Mammary epithelial cell (primary cell): ENCODE measurements at regions of chr17 and their contacts with region 1.

Region 1: GRCh38 chr17:74566132-74566753 is 1.1 kb downstream of the CD300H start:
- DNase-seq: peak; percentile 25
- H3K4me3 ChIP-seq: no peak overlapping the region
- H3K27ac ChIP-seq: no peak overlapping the region
- H3K4me1 ChIP-seq: peaks cover 14% of the 10 kb centered on the region
- H3K27me3 ChIP-seq: no peaks in the 10 kb centered on the region
- CTCF ChIP-seq: peak; percentile 53 to 75

Region 2: DNA sequence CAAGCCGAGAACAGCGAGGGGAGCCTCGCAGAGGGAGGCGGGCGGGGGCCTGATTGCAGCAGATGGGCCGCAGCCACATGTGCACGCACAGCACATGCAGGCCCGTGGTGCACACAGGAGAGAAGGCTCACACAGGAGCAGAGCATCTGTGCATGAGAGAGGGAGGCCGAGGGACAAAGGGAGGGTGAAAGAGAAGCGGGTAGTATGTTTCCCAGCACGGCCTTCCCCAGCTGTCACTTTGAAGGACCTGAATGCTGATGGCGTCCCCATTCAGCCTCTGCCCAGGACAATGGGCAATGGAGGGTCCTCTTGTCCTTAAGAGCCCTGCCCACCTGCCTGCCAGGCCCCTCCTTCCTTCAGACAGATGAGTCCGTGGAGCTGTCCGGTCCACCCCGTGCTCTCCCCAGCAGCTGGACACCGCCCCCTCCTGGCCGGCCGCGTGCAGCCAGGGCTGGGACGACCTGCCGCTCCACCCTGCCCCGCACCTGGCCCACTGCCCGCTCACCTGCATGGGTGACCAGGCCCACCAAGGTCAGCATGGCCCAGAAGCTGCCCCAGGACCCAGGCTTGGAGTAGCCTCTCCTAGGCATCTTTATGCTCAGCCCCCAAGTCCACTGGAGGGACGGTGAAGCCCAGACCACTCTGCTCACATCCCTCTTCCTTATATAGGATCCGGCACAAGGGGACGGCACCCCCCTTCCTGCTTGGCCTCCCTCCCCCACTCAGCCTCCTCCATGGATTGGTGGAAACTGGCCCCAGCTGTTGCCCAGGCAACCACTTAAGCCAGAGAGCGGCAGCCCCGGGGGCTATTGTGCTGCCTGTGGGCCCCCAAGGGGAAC is 204.8 kb before region 1 on chr17 and contains the start of gene BTBD17:
- CTCF ChIA-PET with region 1: no interaction called
- dilution Hi-C with region 1: no loop called
- in situ Hi-C with region 1: no loop called
- intact Hi-C with region 1: no loop called
- DNase-seq: peak; percentile 20
- H3K4me3 ChIP-seq: no peak within 1 kb of the TSS
- H3K27ac ChIP-seq: no peak within 1 kb of the TSS
- H3K4me1 ChIP-seq: no peaks in the 10 kb centered on the region
- H3K27me3 ChIP-seq: peaks cover 9% of the 10 kb centered on the region
- CTCF ChIP-seq: peak; percentile 45 to 72
- total RNA-seq, gene BTBD17: not detected

Region 3: DNA sequence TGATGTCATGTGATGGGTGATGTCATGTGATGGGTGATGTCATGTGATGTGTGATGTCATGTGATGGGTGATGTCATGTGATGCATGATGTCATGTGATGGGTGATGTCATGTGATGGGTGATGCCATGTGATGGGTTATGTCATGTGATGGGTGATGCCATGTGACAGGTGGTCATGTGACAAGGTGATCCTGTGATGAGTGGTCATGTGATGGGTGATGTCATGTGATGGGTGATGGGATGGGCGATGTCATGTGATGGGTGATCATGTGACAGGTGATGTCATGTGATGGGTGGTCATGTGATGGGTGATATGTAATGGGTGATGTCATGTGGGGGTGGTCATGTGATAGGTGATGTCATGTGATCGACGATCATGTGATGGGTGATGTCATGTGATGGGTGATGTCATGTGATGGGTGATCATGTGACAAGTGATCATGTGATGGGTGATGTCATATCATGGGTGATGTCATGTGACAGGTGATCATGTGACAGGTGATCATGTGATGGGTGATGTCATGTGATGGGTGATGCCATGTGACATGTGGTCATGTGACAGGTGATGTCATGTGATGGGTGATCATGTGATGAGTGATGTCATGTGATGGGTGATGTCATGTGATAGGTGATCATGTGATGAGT is 52.1 kb before region 1 on chr17:
- CTCF ChIA-PET with region 1: no interaction called
- dilution Hi-C with region 1: loop called (anchors 5 kb)
- in situ Hi-C with region 1: no loop called
- intact Hi-C with region 1: no loop called
- DNase-seq: peak; percentile 54
- H3K4me3 ChIP-seq: no peak overlapping the region
- H3K27ac ChIP-seq: no peak overlapping the region
- H3K4me1 ChIP-seq: no peaks in the 10 kb centered on the region
- H3K27me3 ChIP-seq: no peaks in the 10 kb centered on the region
- CTCF ChIP-seq: no peak

Region 4: GRCh38 chr17:74608511-74608910 is 42.3 kb after region 1 on chr17:
- CTCF ChIA-PET with region 1: no interaction called
- dilution Hi-C with region 1: no loop called
- in situ Hi-C with region 1: no loop called
- intact Hi-C with region 1: no loop called
- DNase-seq: no peak
- H3K4me3 ChIP-seq: no peak overlapping the region
- H3K27ac ChIP-seq: no peak overlapping the region
- H3K4me1 ChIP-seq: peaks cover 9% of the 10 kb centered on the region
- H3K27me3 ChIP-seq: no peaks in the 10 kb centered on the region
- CTCF ChIP-seq: no peak

Region 5: GRCh38 chr17:74619077-74619673 is 52.9 kb after region 1 on chr17:
- CTCF ChIA-PET with region 1: no interaction called
- dilution Hi-C with region 1: loop called (anchors 5 kb)
- in situ Hi-C with region 1: no loop called
- intact Hi-C with region 1: no loop called
- DNase-seq: no peak
- H3K4me3 ChIP-seq: no peak overlapping the region
- H3K27ac ChIP-seq: no peak overlapping the region
- H3K4me1 ChIP-seq: no peaks in the 10 kb centered on the region
- H3K27me3 ChIP-seq: peaks cover 3% of the 10 kb centered on the region
- CTCF ChIP-seq: no peak

Region 6: DNA sequence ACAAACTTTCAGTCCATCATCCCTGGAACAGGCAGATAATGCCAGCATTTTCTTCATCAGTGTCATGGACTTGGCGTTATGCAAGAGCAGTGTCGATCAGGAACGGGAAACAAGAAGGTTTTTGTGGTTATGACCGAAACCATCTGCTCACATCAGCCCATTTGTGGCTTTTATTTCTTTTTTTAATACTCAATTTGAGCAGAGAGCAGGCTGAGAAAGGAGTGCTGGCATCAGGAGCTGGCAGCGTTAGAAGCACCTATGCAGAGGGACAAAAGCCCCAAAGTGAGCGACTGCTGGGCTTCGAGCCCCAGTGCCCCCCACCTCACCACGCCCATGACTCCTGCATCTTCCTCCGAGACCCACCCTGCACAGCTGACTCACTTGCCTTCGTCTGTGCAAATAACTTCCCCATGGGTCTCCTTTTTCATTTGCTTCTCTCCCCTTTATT is 73.5 kb after region 1 on chr17:
- CTCF ChIA-PET with region 1: no interaction called
- dilution Hi-C with region 1: loop called (anchors 5 kb)
- in situ Hi-C with region 1: no loop called
- intact Hi-C with region 1: no loop called
- DNase-seq: no peak
- H3K4me3 ChIP-seq: no peak overlapping the region
- H3K27ac ChIP-seq: no peak overlapping the region
- H3K4me1 ChIP-seq: no peaks in the 10 kb centered on the region
- H3K27me3 ChIP-seq: peaks cover 5% of the 10 kb centered on the region
- CTCF ChIP-seq: no peak